Left cardiac atrium (tissue), 4 donors: ENCODE measurements at regions of chr1 and their contacts with region 1.

Region 1: DNA sequence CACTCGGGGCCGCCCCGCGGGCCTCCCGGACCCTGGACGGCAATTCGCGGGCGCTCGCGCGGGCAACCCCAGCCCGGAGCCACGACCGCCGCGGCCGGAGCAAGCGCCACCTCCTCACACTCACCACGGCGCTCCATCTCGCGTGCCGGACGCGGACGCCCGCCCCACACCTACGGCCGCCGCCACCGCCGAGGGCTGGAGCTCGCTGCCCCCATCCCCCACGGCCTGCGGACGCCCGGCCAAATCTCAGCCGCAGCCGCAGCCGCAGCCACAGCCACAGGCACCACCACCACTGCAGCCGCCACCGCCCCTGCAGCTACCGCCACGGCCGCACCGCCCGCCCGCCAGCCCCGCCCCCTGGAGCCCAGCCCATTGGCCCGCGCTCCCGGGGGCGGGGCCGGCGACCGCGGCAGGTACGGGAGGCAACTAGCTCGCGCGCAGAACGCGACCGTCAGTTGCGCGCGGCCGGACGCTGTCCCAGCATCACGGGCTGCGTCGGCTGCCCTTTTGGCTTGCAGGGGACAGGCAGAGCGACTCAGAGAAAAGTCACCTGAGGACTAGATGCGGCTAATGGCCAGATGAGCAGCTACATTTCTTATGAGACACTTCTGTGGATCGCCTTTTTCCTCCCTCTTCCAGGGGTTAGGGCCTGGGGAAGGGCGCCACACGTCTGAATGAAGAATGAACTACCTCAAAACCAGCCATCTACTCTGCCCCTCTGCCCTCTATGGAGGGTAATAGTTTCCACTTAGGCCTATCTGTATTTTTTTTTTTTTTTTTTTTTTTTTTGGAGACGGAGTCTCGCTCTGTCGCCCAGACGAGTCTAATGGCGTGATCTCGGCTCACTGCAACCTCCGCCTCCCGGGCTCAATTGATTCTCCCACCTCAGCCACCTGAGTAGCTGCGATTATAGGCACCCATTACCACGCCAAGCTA is at the start of gene ARHGAP29:
- DNase-seq: peak; percentile 89
- ATAC-seq: peak; percentile 97 to 98
- total RNA-seq, gene ARHGAP29: 29.4 to 38.9 TPM

Region 2: DNA sequence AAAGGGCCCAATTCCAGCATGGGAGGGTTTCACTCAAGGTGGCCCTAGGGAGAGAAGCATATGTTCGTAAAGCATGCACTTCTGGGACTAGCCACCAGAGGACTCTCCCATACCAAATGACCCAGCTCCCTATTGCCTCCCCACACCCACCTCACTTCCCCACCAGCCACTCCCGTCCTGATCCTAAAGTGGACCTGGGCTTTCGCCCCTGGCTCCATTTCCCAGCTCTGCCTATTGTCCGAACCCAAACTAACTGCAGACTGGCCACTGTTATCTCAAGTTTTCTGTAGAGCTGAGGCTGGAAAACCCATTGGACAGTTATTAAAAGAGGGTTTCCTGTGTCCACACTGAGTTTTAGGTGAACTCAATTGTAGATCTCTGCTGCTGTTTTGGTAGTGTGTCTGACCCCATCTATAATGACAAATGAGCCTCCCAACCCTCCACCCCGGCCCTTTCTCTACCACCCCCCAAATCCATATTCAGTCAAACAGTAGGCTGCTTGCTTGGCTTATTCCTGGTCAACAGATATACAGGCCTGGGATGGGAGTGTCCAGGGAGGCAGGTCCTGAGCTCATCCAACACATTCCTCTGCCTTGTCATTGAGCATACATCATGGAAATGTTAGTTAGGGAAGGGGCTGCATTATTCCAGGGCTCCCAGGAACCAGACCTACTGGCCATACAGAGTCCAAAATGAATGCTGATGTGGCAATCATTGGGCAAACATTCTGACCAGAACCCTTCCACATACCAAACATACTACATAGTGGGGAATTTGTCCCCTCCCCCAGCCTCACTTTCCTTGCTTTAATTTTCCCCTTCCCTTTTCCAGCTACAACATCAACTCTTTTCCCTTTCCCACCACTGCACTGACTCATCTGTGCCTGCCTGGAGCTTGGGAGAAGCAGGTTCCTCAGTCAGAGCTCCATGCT is 175.8 kb before region 1 on chr1:
- intact Hi-C with region 1: loop called (anchors 5 kb)
- DNase-seq: peak; percentile 81
- ATAC-seq: peak; percentile 87 to 89